AG04449 (cell line): ENCODE measurements at regions of chr10 and their contacts with region 1.

Region 1: GRCh38 chr10:70115948-70116682 is 16.5 kb downstream of the AIFM2 start:
- DNase-seq: no peak
- H3K4me3 ChIP-seq: no peak overlapping the region
- CTCF ChIP-seq: peak; percentile 71

Region 2: GRCh38 chr10:70084189-70084588 is 31.9 kb before region 1 on chr10:
- CTCF ChIA-PET with region 1: interaction called, 17 read pairs
- POLR2A ChIA-PET with region 1: no interaction called
- DNase-seq: no peak
- H3K4me3 ChIP-seq: no peak overlapping the region
- CTCF ChIP-seq: no peak

Region 3: GRCh38 chr10:70093335-70093944 is 22.7 kb before region 1 on chr10:
- CTCF ChIA-PET with region 1: interaction called, 251 read pairs
- POLR2A ChIA-PET with region 1: no interaction called
- DNase-seq: no peak
- H3K4me3 ChIP-seq: no peak overlapping the region
- CTCF ChIP-seq: no peak

Region 4: DNA sequence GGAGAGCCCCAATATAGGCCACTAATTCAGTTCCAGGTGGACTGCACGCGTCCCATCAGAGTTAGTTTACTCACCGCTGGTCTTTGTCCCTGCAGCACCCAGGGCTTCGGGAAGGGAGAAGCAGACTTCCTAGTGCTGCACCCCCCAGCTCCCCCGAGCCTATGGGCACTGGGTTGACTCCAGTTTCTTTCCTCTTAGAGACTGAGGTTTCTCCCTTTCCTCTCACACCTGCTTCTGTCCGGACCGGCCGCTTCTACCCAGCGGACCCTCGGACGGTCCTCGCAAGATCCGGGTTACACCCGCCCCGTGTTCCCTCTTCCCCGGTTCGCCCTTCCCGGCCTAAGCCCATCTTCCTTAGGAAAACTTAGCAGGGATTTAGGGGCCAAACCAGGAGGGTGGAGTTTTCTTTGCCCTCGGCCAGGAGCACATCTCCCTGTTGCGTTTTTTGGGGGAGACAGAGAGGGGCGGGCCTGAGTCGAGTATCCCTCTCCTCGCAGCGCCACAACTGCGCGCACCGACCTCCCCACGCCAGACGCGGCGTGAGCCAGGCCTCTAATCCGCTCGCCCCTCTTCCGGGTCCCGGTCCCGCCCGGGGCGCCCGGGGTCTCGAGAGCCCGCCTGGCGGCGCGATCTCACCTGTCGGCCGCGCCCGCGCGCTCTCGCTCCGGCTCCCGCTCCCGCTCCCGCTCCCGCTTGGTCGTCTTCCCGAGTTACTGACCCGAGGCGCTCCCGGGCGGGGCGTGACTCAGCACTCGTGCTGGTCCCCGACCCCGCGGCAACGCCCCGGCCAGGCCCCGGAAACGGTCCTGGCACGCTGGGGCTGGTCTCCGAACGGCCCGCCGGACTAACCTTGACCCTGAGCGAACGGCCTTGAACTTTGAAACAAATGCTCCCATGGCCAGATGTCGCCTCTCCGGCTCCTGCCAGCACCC is 16.2 kb after region 1 on chr10 and contains the start of gene AIFM2:
- CTCF ChIA-PET with region 1: interaction called, 110 read pairs
- POLR2A ChIA-PET with region 1: no interaction called
- DNase-seq: no peak
- H3K4me3 ChIP-seq: peak within 1 kb of the TSS; percentile 61
- CTCF ChIP-seq: no peak

Region 5: DNA sequence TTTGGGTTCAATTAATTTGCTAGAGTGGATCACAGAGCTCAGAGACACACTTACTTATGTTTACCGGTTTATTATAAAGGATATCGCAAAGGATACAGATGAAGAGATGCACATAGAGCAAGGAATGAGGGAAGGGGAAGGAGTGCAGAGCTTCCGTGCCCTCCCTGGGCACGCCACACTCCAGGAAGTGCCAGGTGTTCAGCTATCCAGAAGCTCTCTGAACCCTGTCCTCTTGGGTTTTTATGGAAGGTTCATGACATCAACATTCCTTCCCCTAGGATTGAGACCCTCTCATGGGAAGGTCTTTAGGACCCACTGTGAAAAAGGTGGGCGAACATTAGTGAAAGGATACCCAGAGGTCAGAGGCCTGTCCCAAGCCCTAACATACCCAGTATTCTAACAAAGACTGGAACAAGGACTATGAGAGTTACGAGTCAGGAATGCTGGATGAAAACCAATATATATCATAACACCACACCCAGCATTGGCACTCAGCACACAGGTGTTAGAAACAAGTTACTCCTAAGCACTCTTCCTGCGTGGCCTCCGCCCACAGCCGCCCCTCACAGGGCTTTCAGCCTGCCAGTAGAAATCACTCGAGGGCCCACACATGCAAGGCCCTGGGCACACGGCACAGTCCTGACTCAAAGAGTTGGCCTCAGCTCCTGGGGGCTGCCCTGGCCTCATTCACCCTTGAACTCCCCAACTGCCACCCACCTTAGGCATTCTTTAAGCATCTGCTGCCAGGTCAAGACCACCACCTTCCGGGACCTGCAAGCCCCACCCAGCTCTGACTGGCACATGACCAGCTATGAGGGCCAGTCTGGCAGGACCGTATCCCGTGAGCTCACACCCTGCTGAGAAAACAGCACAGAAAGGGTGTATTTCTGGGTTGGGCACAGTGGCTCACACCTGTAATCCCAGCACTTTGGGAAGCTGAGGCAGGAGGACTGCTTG is 22.1 kb after region 1 on chr10:
- CTCF ChIA-PET with region 1: interaction called, 25 read pairs
- POLR2A ChIA-PET with region 1: no interaction called
- DNase-seq: no peak
- H3K4me3 ChIP-seq: no peak overlapping the region
- CTCF ChIP-seq: no peak

Region 6: GRCh38 chr10:70247360-70247759 is 131.2 kb after region 1 on chr10:
- CTCF ChIA-PET with region 1: no interaction called
- POLR2A ChIA-PET with region 1: no interaction called
- DNase-seq: no peak
- H3K4me3 ChIP-seq: no peak overlapping the region
- CTCF ChIP-seq: no peak

Region 7: DNA sequence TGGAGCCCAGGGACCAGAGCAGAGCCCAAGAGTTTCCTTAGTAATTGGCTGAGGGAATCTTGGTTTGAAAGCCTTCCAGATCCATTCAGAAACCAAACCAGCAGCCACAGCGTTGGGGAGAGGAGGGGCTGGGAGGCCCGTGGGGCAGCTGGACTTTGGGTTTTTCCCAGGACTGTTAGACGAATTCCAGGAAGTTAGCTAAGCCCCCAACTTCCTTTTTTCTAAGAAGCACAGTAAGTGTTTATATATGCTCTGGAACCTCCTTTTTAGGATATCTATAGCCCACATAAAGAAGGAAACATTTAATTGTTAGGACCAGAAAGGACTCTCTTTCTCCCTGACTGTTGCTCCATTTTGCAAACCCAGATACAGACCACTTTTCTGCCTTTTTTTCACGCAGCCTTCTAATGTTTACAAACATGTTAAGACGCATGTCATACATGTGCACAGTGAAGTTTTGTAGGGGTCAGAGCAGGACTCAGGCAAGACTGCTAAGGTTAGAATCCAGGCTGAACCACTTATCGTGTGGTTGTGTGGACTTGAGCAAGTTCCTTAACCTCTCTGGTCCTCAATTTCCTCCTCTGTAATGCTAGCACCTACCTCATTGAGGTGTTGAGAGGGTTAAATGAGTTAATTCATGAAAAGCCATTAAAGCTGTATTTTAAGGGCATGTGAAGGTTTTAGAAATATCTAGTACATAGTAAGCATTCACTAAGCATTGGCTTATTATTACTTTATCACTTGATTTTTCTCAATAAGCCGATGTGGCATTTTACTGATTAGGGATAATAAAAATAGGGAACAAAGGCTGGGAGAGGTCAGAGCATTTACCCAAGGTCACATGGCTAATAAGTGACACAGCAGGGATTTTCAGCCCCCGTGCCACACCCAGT is 626.7 kb after region 1 on chr10:
- CTCF ChIA-PET with region 1: no interaction called
- POLR2A ChIA-PET with region 1: no interaction called
- DNase-seq: peak; percentile 53
- H3K4me3 ChIP-seq: no peak overlapping the region
- CTCF ChIP-seq: no peak